ENCODE measurements at regions of chr4 and their contacts with region 1.

Region 1: DNA sequence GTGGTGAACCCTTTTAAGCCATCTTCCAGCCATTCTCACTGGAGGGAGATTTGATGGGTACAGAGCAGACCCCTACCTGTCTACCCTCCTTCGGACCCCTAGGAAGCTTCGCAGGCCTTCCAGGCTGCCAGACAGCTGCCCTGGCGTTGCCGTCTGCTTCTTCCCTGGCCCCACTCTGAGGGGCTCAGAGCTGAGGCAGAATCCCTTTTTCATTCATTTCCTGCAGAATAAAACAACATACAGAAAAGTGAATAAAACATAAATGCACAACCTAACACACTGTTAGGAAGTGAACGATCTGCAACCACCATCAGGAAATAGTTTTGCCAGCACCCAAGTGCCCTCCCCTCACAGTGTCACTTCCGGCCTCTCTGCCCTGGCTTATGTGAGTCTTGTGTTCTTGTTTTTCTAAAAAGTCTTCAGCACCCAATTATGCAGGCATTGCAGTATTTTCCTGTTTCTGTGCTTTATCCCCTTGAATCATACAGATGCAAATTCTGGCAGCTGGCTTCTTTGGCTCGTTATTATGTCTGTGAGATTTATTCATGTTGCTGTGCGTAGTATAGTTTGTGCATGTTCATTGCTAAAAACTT is 5.6 kb upstream of the ADD1 start:
- DNase-seq: peak; percentile 56 to 89 (median 74)
- ATAC-seq: peak; percentile 98
- H3K4me3 ChIP-seq: peak overlapping the region; percentile 50
- H3K4me3 Mint-ChIP-seq: peak overlapping the region; percentile 86
- H3K27ac ChIP-seq: peak overlapping the region; percentile 76
- H3K27ac Mint-ChIP-seq: peak overlapping the region; percentile 89
- H3K4me1 ChIP-seq: peaks cover 69% of the 10 kb centered on the region
- H3K4me1 Mint-ChIP-seq: peaks cover 59% of the 10 kb centered on the region
- H3K27me3 ChIP-seq: no peaks in the 10 kb centered on the region
- H3K27me3 Mint-ChIP-seq: no peaks in the 10 kb centered on the region
- CTCF ChIP-seq: no peak

Region 2: GRCh38 chr4:2800691-2801596 is 37.1 kb before region 1 on chr4:
- CTCF ChIA-PET with region 1: no interaction called
- POLR2A ChIA-PET with region 1: interaction called, 8 read pairs
- intact Hi-C with region 1: loop called (anchors 5 to 10 kb)
- DNase-seq: peak in 5 of 14 experiments; percentile 23 to 79 (median 41)
- ATAC-seq: no peak
- H3K4me3 ChIP-seq: peak overlapping the region; percentile 52
- H3K4me3 Mint-ChIP-seq: peak overlapping the region; percentile 51
- H3K27ac ChIP-seq: peak overlapping the region in 1 of 2 donors; percentile 37
- H3K27ac Mint-ChIP-seq: peak overlapping the region; percentile 70
- H3K4me1 ChIP-seq: peaks cover 86% of the 10 kb centered on the region
- H3K4me1 Mint-ChIP-seq: peaks cover 31% of the 10 kb centered on the region
- H3K27me3 ChIP-seq: no peaks in the 10 kb centered on the region
- H3K27me3 Mint-ChIP-seq: no peaks in the 10 kb centered on the region
- CTCF ChIP-seq: no peak

Region 3: DNA sequence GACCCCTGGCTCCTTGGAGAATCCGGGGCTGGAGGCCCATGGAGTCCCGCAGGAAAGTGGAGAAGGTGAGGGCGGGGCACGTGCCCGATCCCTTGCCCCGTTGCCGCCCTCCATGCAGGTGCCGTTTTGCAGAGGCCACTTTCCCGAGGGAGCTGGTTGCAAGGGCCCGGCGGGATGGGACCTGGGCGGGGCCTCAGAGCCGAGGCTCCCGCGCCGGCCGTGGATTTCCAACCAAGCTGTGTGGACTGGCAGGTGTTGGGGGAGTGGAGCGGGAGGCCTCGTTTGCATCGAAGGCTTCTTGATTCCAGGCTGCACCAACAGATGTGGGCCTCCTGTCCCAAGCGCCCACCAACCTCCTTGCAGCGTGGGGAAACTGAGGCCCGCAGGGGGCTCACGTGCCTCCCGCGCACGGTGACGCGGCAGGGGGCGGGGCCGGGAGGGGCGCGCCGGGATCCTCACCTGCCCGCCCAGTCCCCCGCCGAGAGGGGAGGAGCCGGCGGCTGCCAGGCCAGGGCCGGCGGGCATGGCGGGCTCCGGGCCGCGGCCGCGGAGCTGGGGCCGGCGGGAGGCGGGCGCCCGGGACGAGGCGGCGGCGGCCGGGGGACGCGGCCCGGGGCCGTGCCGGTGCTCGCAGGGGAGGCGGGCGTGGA is 20.2 kb before region 1 on chr4:
- CTCF ChIA-PET with region 1: interaction called, 3 read pairs
- POLR2A ChIA-PET with region 1: interaction called, 24 read pairs
- intact Hi-C with region 1: loop called in 1 of 2 experiments (anchors 2 kb)
- DNase-seq: peak in 8 of 14 experiments; percentile 29 to 60 (median 44)
- ATAC-seq: peak; percentile 64
- H3K4me3 ChIP-seq: peak overlapping the region; percentile 51
- H3K4me3 Mint-ChIP-seq: peak overlapping the region; percentile 85
- H3K27ac ChIP-seq: no peak overlapping the region
- H3K27ac Mint-ChIP-seq: peak overlapping the region; percentile 83
- H3K4me1 ChIP-seq: peaks cover 78% of the 10 kb centered on the region
- H3K4me1 Mint-ChIP-seq: peaks cover 66% of the 10 kb centered on the region
- H3K27me3 ChIP-seq: no peaks in the 10 kb centered on the region
- H3K27me3 Mint-ChIP-seq: no peaks in the 10 kb centered on the region
- CTCF ChIP-seq: no peak

Region 4: GRCh38 chr4:2852481-2852921 is 14.5 kb after region 1 on chr4:
- CTCF ChIA-PET with region 1: interaction called, 3 read pairs
- POLR2A ChIA-PET with region 1: interaction called, 12 read pairs
- intact Hi-C with region 1: no loop called
- DNase-seq: peak in 3 of 14 experiments; percentile 34 to 46 (median 40)
- ATAC-seq: peak; percentile 67
- H3K4me3 ChIP-seq: no peak overlapping the region
- H3K4me3 Mint-ChIP-seq: peak overlapping the region; percentile 26
- H3K27ac ChIP-seq: peak overlapping the region; percentile 9 to 58
- H3K27ac Mint-ChIP-seq: peak overlapping the region; percentile 82
- H3K4me1 ChIP-seq: peaks cover 53% of the 10 kb centered on the region
- H3K4me1 Mint-ChIP-seq: peaks cover 79% of the 10 kb centered on the region
- H3K27me3 ChIP-seq: no peaks in the 10 kb centered on the region
- H3K27me3 Mint-ChIP-seq: no peaks in the 10 kb centered on the region
- CTCF ChIP-seq: no peak

Region 5: GRCh38 chr4:3062471-3062870 is 224.5 kb after region 1 on chr4:
- CTCF ChIA-PET with region 1: no interaction called
- POLR2A ChIA-PET with region 1: no interaction called
- intact Hi-C with region 1: no loop called
- DNase-seq: no peak
- ATAC-seq: no peak
- H3K4me3 ChIP-seq: no peak overlapping the region
- H3K4me3 Mint-ChIP-seq: no peak overlapping the region
- H3K27ac ChIP-seq: no peak overlapping the region
- H3K27ac Mint-ChIP-seq: no peak overlapping the region
- H3K4me1 ChIP-seq: no peaks in the 10 kb centered on the region
- H3K4me1 Mint-ChIP-seq: no peaks in the 10 kb centered on the region
- H3K27me3 ChIP-seq: peaks cover 0 to 3% of the 10 kb centered on the region in 2 experiments
- H3K27me3 Mint-ChIP-seq: peaks cover 4% of the 10 kb centered on the region
- CTCF ChIP-seq: no peak

Region 6: DNA sequence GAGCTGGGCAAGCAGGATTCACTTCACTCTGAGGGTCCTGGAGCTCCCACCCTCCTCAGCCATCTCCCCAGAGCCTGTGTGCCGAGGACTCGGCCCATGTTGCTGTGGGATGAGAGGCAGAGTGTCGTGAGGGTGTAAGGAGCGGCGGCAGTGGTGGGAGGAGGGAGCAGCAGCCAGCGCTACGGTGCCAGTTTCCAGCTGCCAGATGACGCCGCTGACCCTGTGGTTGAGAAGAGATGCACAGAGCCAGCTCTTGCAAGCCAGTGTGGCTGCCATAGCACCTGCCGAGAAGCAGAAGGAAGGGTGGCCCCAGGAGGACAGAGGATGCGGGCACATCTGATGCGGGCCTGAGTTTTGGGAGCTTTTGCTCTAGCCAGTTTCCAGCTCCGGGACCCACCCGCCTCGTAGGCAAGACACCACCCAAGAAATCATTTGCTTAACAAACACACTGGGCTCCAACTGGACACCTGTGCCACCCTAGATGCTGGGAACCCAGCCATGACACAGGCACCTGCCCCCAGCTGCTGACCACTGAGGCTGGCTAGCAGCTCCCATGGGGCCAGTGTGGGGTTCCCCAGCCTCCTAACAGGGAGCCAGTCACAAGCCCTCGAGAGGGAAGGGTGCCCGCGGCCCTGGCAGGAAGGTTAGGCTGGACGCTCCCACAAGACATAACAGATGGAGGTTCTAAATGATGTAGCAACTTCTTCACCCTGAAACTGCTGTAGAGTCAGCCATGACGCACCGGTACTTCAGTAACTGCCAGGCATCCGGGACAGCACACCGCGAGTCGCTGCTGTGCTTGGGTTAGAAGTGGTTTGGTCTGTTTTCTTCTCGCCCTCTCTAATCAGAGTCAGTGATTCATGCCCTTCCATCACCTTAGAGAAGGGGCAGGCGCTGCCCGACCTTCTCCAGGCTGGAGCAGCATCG is 419.8 kb after region 1 on chr4:
- CTCF ChIA-PET with region 1: no interaction called
- POLR2A ChIA-PET with region 1: no interaction called
- intact Hi-C with region 1: no loop called
- DNase-seq: peak in 1 of 14 experiments; percentile 28
- ATAC-seq: no peak
- H3K4me3 ChIP-seq: no peak overlapping the region
- H3K4me3 Mint-ChIP-seq: no peak overlapping the region
- H3K27ac ChIP-seq: no peak overlapping the region
- H3K27ac Mint-ChIP-seq: no peak overlapping the region
- H3K4me1 ChIP-seq: no peaks in the 10 kb centered on the region
- H3K4me1 Mint-ChIP-seq: no peaks in the 10 kb centered on the region
- H3K27me3 ChIP-seq: no peaks in the 10 kb centered on the region
- H3K27me3 Mint-ChIP-seq: no peaks in the 10 kb centered on the region
- CTCF ChIP-seq: no peak

Measured in CD4-positive, alpha-beta T cell (primary cell).